Panc1 (cell line): ENCODE measurements at regions of chr19 and their contacts with region 1.

Region 1: DNA sequence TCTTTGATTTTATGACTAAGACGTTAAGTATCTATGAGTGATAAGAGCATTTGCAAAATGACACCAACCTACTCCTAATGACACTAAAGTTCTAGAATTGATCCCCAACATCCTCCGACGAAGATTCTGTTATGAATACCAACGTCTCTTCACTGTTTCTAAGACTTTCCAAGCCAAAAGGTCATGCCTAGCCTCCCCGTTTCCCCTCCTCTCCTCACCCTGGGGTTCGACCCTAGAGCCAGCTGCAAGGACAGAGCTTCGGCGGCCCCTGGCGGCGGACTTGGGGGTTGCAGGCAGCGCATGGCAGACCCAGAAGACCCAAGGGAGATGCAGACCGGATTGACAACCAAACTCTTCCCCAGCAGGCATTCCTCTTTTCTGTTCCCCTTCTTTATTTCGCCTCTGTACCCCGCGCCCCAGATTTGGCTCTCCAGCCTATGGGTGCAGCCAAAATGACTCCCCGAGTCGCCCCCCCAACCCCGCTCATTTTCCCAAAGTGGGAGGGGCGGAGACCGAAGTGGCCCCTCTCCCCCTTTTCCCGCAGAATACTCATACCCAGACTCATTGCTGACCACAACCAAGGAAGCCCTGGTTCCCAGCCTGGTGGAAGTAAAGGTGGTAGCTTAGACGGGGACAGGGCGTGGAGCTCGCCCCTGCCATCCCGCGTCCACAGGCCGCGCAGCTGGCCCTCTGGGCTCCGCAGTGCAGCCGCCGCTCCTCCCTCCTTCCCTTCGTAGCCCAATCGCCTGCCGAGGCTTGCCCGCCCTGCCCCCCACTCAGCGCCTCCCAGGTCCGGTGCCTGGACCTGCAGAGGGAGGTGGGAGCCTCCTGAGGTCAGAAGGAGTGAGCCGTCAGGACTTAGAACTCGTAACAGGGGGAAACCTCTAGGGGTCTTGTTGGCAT is 4.1 kb upstream of the EML2 start:
- DNase-seq: peak; percentile 80
- ATAC-seq: peak; percentile 58
- H3K4me3 ChIP-seq: peak overlapping the region; percentile 52 to 69
- H3K27ac ChIP-seq: peak overlapping the region; percentile 69
- H3K4me1 ChIP-seq: peaks cover 13% of the 10 kb centered on the region; the same call in 1 of the 2 replicates
- H3K27me3 ChIP-seq: no peaks in the 10 kb centered on the region
- CTCF ChIP-seq: peak; percentile 95

Region 2: GRCh38 chr19:45506246-45506990 is 136.9 kb before region 1 on chr19:
- CTCF ChIA-PET with region 1: interaction called, 10 read pairs
- POLR2A ChIA-PET with region 1: no interaction called
- in situ Hi-C with region 1: no loop called
- intact Hi-C with region 1: no loop called
- DNase-seq: peak; percentile 46
- ATAC-seq: peak; percentile 87
- H3K4me3 ChIP-seq: peak overlapping the region; percentile 88 to 89
- H3K27ac ChIP-seq: peak overlapping the region; percentile 93
- H3K4me1 ChIP-seq: peaks cover 9% of the 10 kb centered on the region
- H3K27me3 ChIP-seq: no peaks in the 10 kb centered on the region
- CTCF ChIP-seq: peak; percentile 79; the same call in 1 of the 2 replicates

Region 3: DNA sequence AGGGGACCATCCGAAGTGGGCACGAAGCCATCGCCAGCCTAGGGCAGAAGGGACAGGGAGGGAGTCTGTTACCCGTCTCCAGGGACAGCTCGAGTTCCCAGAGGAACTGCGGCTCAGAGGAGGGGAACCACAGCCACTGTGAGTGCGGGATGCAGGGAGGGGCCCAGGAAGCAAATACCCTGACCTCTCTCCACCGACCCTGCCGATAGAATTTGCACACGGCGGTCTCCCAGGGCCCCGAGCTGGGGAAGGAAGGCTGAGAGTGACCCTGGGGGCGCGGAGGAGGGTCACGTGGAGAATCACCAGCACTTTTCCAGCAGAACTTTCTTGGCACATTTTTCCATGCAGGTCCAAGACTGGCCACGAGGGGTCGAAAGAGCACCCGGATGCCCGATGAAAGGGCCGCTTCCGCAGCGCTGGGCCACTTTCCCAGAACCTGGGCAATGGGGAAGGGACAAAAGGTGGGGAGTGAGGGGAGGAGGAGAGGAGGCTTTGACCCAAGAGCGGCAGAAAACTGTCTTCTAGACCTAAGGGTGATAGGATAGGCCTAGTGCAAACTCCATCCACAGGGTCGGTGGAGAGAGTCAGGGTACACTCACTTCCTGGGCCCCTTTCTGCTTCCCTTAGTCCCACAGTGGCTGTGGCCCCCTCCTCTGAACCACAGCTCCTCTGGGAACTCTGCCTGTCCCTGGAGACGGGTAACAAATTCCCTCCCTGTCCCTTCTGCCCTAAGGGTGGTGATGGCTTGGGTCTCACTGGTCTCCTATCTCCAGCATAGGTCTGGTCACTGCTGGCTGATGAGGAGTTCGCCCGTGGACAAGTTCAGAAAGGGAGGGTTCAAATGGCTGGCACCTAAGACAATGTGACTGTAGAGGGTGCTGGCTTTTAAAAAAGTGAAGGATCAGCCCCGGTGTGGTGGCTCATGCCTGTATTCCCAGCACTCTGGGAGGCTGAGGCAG is 35.9 kb before region 1 on chr19:
- CTCF ChIA-PET with region 1: interaction called, 8 read pairs
- POLR2A ChIA-PET with region 1: interaction called, 13 read pairs
- in situ Hi-C with region 1: no loop called
- intact Hi-C with region 1: no loop called
- DNase-seq: no peak
- ATAC-seq: peak; percentile 84
- H3K4me3 ChIP-seq: peak overlapping the region in 1 of 2 experiments; percentile 32; a peak in 1 of 4 replicates
- H3K27ac ChIP-seq: peak overlapping the region; percentile 45; the same call in 1 of the 2 replicates
- H3K4me1 ChIP-seq: no peaks in the 10 kb centered on the region; the same call in 1 of the 2 replicates
- H3K27me3 ChIP-seq: no peaks in the 10 kb centered on the region; the same call in 1 of the 2 replicates
- CTCF ChIP-seq: peak; percentile 89

Region 4: GRCh38 chr19:45670670-45671453 is 27.6 kb after region 1 on chr19:
- CTCF ChIA-PET with region 1: no interaction called
- POLR2A ChIA-PET with region 1: no interaction called
- in situ Hi-C with region 1: no loop called
- intact Hi-C with region 1: no loop called
- DNase-seq: no peak
- ATAC-seq: peak; percentile 71
- H3K4me3 ChIP-seq: peak overlapping the region; percentile 20 to 44
- H3K27ac ChIP-seq: no peak overlapping the region
- H3K4me1 ChIP-seq: no peaks in the 10 kb centered on the region
- H3K27me3 ChIP-seq: no peaks in the 10 kb centered on the region
- CTCF ChIP-seq: no peak

Region 5: DNA sequence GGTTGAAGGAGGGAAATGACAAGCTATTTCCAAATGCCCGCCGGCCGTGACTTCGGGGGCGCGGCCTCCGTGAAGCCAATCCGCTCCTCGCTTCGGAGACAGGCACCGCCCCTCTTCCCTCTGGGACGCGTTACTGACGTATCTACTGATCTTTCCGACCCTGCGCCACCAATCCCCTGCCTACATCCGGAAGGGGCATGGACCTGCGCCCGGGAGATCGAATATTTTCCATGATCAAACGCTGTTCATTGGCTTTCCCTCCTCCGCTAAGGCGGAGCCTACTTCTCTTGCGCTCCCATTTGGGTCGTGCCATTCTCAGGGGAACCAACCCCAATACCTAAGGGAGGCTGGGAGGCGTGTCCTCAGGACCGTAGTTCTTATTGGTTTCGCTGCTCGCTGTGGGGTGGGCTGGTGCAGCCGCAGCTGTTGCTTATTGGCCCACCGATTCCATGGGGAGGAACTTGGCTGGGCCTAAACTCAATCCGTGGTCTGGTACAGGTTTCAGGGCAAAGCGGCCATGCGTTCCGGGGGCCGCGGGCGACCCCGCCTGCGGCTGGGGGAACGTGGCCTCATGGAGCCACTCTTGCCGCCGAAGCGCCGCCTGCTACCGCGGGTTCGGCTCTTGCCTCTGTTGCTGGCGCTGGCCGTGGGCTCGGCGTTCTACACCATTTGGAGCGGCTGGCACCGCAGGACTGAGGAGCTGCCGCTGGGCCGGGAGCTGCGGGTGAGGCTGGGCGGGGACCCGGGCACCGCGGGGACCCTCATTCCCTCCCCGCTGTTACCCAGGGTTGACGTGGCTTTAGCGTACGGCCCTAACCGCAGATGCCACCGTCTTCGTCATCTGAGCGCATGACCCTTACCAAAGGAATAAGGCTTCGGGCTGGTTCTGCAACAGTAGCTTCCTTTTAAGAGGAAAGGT is 49.2 kb after region 1 on chr19 and contains the start of gene QPCTL:
- CTCF ChIA-PET with region 1: no interaction called
- POLR2A ChIA-PET with region 1: interaction called, 18 read pairs
- in situ Hi-C with region 1: no loop called
- intact Hi-C with region 1: no loop called
- DNase-seq: peak; percentile 96
- ATAC-seq: peak; percentile 95
- H3K4me3 ChIP-seq: peak within 1 kb of the TSS; percentile 73 to 74
- H3K27ac ChIP-seq: peak within 1 kb of the TSS; percentile 86
- H3K4me1 ChIP-seq: no peaks in the 10 kb centered on the region
- H3K27me3 ChIP-seq: no peaks in the 10 kb centered on the region
- CTCF ChIP-seq: no peak
- total RNA-seq, gene QPCTL: 19.4 TPM

Region 6: GRCh38 chr19:45717166-45717982 is 74.1 kb after region 1 on chr19:
- CTCF ChIA-PET with region 1: no interaction called
- POLR2A ChIA-PET with region 1: no interaction called
- in situ Hi-C with region 1: no loop called
- intact Hi-C with region 1: no loop called
- DNase-seq: peak; percentile 97
- ATAC-seq: peak; percentile 96
- H3K4me3 ChIP-seq: peak overlapping the region; percentile 72 to 92
- H3K27ac ChIP-seq: peak overlapping the region; percentile 96
- H3K4me1 ChIP-seq: peaks cover 15% of the 10 kb centered on the region
- H3K27me3 ChIP-seq: no peaks in the 10 kb centered on the region
- CTCF ChIP-seq: no peak

Region 7: GRCh38 chr19:45792470-45793177 is 149.3 kb after region 1 on chr19 and contains the start of gene DMWD:
- CTCF ChIA-PET with region 1: no interaction called
- POLR2A ChIA-PET with region 1: interaction called, 10 read pairs
- in situ Hi-C with region 1: no loop called
- intact Hi-C with region 1: no loop called
- DNase-seq: peak; percentile 75
- ATAC-seq: peak; percentile 98
- H3K4me3 ChIP-seq: peak within 1 kb of the TSS; percentile 73 to 91
- H3K27ac ChIP-seq: peak within 1 kb of the TSS; percentile 87
- H3K4me1 ChIP-seq: no peaks in the 10 kb centered on the region
- H3K27me3 ChIP-seq: no peaks in the 10 kb centered on the region
- CTCF ChIP-seq: no peak
- total RNA-seq, gene DMWD: 64.6 TPM